ENCODE measurements at regions of chr19 and their contacts with region 1.

Region 1: GRCh38 chr19:21568816-21569493 is 63.6 kb downstream of the ZNF429 start:
- DNase-seq: peak; percentile 94
- H3K4me3 Mint-ChIP-seq: peak overlapping the region; percentile 99
- H3K27ac Mint-ChIP-seq: peak overlapping the region; percentile 99
- H3K4me1 Mint-ChIP-seq: peaks cover 30% of the 10 kb centered on the region
- H3K27me3 Mint-ChIP-seq: no peaks in the 10 kb centered on the region

Region 2: DNA sequence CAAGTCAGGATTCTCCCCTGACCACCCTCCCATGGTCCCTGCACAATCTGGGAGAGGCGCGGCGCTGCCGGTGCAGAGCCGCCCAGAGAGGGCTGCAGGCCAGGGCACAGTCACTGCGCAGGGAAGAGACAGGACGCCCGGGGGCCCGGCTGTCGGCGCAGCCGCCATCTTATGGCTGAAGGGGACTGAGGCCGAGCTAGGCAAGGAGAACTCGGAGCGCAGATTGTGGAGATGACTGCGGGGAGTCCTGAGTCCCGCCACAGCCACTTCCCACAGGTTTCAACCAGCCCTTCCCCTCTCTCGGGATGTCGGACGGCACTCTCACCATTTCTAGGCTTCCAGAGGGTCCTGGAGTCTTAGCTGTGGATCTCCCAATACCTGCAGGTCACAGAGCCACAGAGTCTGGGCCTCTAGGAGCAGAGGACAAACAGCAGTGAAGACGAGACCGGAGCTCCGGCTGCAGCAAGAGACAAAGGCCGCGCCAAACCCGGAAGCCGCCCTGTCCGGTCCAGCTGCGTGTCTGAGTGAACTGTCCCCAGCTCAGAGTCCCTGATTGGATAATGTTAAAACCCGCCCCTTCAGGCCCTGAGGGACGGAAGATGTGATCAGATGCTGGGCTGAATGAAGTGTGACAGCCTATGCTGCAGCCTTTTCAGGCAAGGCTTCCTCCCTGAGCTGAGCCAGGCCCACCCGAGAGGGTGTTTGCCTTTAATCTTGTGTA is 239.9 kb before region 1 on chr19 and contains the start of gene ZNF708:
- CTCF ChIA-PET with region 1: no interaction called
- intact Hi-C with region 1: loop called (anchors 2 kb)
- DNase-seq: peak; percentile 90
- H3K4me3 Mint-ChIP-seq: peak within 1 kb of the TSS; percentile 98
- H3K27ac Mint-ChIP-seq: peak within 1 kb of the TSS; percentile 98
- H3K4me1 Mint-ChIP-seq: peaks cover 33% of the 10 kb centered on the region
- H3K27me3 Mint-ChIP-seq: no peaks in the 10 kb centered on the region
- total RNA-seq, gene ZNF708: 7.8 to 10.9 TPM

Region 3: GRCh38 chr19:21604351-21604926 is 35.5 kb after region 1 on chr19:
- CTCF ChIA-PET with region 1: no interaction called
- intact Hi-C with region 1: loop called (anchors 2 kb)
- DNase-seq: peak; percentile 38
- H3K4me3 Mint-ChIP-seq: peak overlapping the region; percentile 78
- H3K27ac Mint-ChIP-seq: peak overlapping the region; percentile 82
- H3K4me1 Mint-ChIP-seq: peaks cover 22% of the 10 kb centered on the region
- H3K27me3 Mint-ChIP-seq: no peaks in the 10 kb centered on the region